BJ (cell line): ENCODE measurements at regions of chr1 and their contacts with region 1.

Region 1: DNA sequence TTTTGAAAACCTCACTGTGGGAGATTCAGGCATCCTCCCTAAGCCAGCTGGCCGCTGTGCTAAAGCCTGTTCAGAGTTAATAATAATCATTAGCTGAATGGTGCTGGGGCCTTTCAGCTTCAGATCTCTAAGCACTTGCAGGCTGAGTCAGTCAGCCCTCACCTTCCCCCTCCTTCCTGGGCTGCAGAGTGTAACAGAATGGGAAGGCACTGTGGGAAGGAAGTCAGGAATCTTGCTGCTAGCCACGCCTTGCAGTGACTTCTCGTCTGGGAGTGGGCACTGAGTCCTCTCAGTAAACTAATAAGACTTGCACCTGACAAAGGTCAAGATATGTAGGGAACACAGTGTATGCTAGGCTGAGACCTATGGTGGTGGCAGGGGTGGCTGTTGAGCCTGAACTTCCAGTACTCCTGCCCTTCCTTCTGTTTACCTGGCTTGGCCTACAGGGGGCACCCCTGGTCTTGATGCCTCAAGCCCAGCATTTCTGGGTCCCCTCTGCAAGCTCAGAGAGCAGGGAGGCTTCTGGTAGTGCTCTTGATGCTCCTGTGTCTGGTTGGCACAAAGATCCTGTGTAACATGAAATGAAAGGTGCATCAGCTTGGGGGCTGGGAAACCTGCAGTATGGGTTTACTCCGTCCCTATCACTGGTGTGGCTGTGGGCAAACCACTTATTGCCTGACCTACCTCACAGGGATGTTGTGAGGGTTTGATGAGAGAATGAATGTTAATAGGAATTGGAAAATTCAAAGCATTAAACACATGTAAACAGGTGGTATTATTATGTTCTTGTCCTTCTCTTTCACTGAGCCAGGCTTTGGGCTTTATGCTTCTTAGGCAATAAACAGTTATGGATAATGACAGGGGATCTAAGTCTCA is 6.0 kb downstream of the CYB561D1 start:
- DNase-seq: peak; percentile 49
- H3K4me3 ChIP-seq: no peak overlapping the region
- H3K27me3 ChIP-seq: no peaks in the 10 kb centered on the region
- CTCF ChIP-seq: peak; percentile 62

Region 2: GRCh38 chr1:109426278-109427170 is 73.4 kb before region 1 on chr1 and contains the start of gene PSMA5:
- CTCF ChIA-PET with region 1: interaction called, 12 read pairs
- POLR2A ChIA-PET with region 1: no interaction called
- DNase-seq: peak; percentile 98
- H3K4me3 ChIP-seq: peak within 1 kb of the TSS; percentile 77
- H3K27me3 ChIP-seq: no peaks in the 10 kb centered on the region
- CTCF ChIP-seq: no peak
- polyA plus RNA-seq, gene PSMA5: 151 and 226 TPM in 2 replicates

Region 3: GRCh38 chr1:109483672-109484518 is 16.0 kb before region 1 on chr1 and contains the start of gene ATXN7L2:
- CTCF ChIA-PET with region 1: interaction called, 33 read pairs
- POLR2A ChIA-PET with region 1: no interaction called
- DNase-seq: peak; percentile 47
- H3K4me3 ChIP-seq: peak within 1 kb of the TSS; percentile 65
- H3K27me3 ChIP-seq: no peaks in the 10 kb centered on the region
- CTCF ChIP-seq: no peak
- polyA plus RNA-seq, gene ATXN7L2: 5.7 and 8.7 TPM in 2 replicates

Region 4: GRCh38 chr1:109516872-109517271 is 17.0 kb after region 1 on chr1:
- CTCF ChIA-PET with region 1: interaction called, 1,371 read pairs
- POLR2A ChIA-PET with region 1: no interaction called
- DNase-seq: peak; percentile 75
- H3K4me3 ChIP-seq: no peak overlapping the region
- H3K27me3 ChIP-seq: no peaks in the 10 kb centered on the region
- CTCF ChIP-seq: no peak